HepG2 (cell line): ENCODE measurements at regions of chr16 and their contacts with region 1.

Region 1: GRCh38 chr16:87806603-87807546 is 41.1 kb upstream of the KLHDC4 start:
- DNase-seq: peak; percentile 61
- ATAC-seq: peak; percentile 71
- H3K4me3 ChIP-seq: peak overlapping the region; percentile 38 to 66 (median 50)
- H3K27ac ChIP-seq: peak overlapping the region; percentile 23
- H3K4me1 ChIP-seq: peaks cover 62% of the 10 kb centered on the region
- H3K27me3 ChIP-seq: peaks cover 0 to 11% of the 10 kb centered on the region in 2 experiments; a peak in 3 of 5 replicates
- CTCF ChIP-seq: no peak
- EP300 ChIP-seq: no peak
- POLR2A ChIP-seq: peak; percentile 42 to 68; a peak in 3 of 4 replicates
- RAD21 ChIP-seq: no peak; the same call in 1 of the 2 replicates

Region 2: DNA sequence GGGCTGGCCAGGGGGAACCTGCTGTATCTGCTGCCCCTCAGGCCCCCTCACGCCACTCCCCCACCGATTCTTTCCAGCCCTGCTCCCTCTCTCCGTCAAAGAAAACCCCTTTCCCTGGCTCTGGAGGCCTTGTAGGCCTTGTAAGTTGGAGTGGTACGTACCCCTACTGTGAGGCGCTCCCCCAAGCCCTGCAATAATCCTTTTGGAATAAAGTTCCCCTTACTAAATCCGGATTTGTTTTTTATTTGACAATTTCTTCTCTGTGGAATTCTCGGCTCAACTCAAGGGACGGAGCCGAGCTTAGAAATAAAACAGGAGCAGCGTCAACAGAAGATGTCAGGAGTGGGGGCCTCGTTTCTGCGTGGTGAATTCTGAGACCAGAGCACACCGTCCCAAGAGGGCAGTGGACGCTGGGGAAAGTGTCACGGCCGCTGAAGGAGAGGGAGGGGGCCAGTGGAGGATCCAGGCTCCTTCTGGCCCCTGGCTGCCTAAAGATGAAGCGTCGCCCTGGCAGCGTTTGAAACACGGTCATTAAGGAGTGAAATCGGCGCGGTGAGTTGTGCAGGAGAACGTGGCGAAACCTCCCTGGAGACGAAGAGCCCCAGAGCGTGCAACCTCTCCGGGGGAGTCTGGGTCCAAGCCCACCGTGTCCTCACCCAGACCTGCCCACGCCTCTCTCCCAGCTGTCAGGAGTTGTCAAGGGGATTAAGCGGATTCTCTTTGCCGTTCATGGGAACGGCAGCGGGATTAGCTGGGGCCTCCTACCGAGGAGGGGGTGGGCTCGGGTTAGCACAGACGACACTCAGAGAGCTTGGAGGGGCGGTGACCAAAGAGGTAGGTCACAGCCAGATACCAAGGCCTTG is 15.5 kb after region 1 on chr16:
- CTCF ChIA-PET with region 1: no interaction called
- POLR2A ChIA-PET with region 1: interaction called, 22 read pairs
- in situ Hi-C with region 1: no loop called
- intact Hi-C with region 1: no loop called
- DNase-seq: no peak
- ATAC-seq: no peak
- H3K4me3 ChIP-seq: no peak overlapping the region
- H3K27ac ChIP-seq: no peak overlapping the region
- H3K4me1 ChIP-seq: peaks cover 70% of the 10 kb centered on the region
- H3K27me3 ChIP-seq: peaks cover 13 to 69% of the 10 kb centered on the region in 2 experiments
- CTCF ChIP-seq: no peak
- EP300 ChIP-seq: no peak
- POLR2A ChIP-seq: no peak
- RAD21 ChIP-seq: no peak

Region 3: GRCh38 chr16:87842209-87842869 is 35.5 kb after region 1 on chr16:
- CTCF ChIA-PET with region 1: no interaction called
- POLR2A ChIA-PET with region 1: interaction called, 16 read pairs
- in situ Hi-C with region 1: no loop called
- intact Hi-C with region 1: no loop called
- DNase-seq: peak; percentile 51
- ATAC-seq: peak; percentile 18
- H3K4me3 ChIP-seq: no peak overlapping the region
- H3K27ac ChIP-seq: peak overlapping the region; percentile 76
- H3K4me1 ChIP-seq: peaks cover 90% of the 10 kb centered on the region
- H3K27me3 ChIP-seq: no peaks in the 10 kb centered on the region
- CTCF ChIP-seq: no peak
- EP300 ChIP-seq: peak; percentile 41 to 66; a peak in 3 of 4 replicates
- POLR2A ChIP-seq: 0 out of 4 replicates have a peak, but pooled peaks of 1 of the 2 experiments have one; percentile 7
- RAD21 ChIP-seq: peak; percentile 7; the same call in 1 of the 2 replicates

Region 4: DNA sequence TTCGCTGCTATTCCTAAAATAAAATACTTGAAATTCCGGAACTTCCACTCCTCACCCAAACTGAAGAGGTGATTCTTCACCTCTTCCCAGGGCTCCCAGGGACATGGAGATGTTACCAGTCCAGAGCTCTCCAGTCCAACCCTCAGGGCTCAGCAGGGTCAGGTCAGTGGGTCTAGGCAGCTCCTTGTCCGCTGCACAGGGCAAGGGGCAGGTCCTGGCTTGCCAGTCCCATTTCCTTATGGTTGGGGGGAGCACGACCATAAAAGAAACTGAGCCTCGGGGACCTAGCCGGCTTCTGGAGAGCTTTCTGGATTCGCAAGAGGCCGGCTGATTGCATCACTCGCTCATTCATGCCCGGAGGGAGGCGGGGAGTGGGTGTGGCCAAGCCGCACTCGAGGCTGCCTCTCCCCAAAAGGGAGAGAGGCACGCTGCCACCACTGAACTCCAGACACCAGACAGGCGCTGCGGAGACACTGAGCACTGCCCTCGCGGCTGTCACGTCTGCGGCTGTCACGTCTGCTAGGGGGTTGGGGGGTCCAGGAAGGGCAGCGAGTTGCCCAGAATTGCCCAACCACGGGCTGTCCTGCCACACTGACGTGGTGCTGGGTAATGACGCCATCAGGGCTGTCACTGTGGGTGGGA is 46.7 kb after region 1 on chr16:
- CTCF ChIA-PET with region 1: no interaction called
- POLR2A ChIA-PET with region 1: interaction called, 16 read pairs
- in situ Hi-C with region 1: no loop called
- intact Hi-C with region 1: no loop called
- DNase-seq: peak; percentile 89
- ATAC-seq: peak; percentile 2
- H3K4me3 ChIP-seq: peak overlapping the region in 2 of 3 experiments; percentile 18 to 62; a peak in 4 of 6 replicates
- H3K27ac ChIP-seq: peak overlapping the region; percentile 98
- H3K4me1 ChIP-seq: peaks cover 100% of the 10 kb centered on the region
- H3K27me3 ChIP-seq: no peaks in the 10 kb centered on the region
- CTCF ChIP-seq: peak; percentile 39
- EP300 ChIP-seq: peak; percentile 12 to 63; a peak in 3 of 4 replicates
- POLR2A ChIP-seq: peak in 1 of 2 experiments; percentile 82; a peak in 2 of 4 replicates
- RAD21 ChIP-seq: peak; percentile 36; the same call in 1 of the 2 replicates

Region 5: DNA sequence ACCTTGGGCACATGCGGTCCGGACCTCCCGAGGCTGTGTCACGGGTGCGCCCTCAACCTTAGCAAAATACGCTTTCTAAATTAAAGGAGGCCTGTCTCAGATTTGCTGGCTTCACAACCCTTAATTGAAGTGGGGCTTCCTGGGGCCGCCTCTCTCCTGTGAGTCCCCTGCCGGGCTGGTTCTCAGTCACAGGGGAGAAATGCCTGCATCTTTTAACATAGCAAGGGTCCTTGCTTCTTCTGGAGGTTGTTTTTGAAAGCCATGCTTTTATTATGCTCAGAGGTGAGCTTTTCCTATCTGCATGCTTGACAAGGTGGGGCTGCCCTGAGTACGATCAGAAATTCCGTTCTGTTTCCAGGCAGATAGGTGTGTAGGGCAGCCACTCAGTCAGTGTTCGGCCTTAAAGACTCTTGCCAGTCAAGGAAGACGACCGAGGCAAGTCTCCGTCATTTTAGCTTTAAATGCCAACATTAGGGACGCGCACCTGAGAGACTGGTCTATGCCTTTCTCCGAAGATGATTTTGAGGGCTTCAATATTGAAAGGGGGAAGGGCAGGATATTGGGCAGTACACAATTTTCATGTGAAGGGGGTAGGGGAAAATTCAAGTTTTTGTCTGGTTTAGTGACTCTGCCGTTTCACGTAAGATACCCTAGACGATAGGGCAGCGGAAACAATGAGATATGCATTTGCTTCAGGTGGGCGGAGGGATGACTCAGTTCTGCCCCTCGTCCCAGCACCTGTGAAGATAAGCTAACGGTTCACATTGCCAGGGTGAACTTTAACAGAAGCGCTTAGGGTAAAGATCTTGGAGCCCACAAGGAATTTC is 68.0 kb after region 1 on chr16:
- CTCF ChIA-PET with region 1: no interaction called
- POLR2A ChIA-PET with region 1: interaction called, 41 read pairs
- in situ Hi-C with region 1: no loop called
- intact Hi-C with region 1: no loop called
- DNase-seq: no peak
- ATAC-seq: no peak
- H3K4me3 ChIP-seq: no peak overlapping the region
- H3K27ac ChIP-seq: no peak overlapping the region
- H3K4me1 ChIP-seq: peaks cover 79% of the 10 kb centered on the region
- H3K27me3 ChIP-seq: no peaks in the 10 kb centered on the region
- CTCF ChIP-seq: no peak
- EP300 ChIP-seq: no peak
- POLR2A ChIP-seq: no peak
- RAD21 ChIP-seq: no peak